ENCODE measurements at regions of chr16 and their contacts with region 1.

Region 1: DNA sequence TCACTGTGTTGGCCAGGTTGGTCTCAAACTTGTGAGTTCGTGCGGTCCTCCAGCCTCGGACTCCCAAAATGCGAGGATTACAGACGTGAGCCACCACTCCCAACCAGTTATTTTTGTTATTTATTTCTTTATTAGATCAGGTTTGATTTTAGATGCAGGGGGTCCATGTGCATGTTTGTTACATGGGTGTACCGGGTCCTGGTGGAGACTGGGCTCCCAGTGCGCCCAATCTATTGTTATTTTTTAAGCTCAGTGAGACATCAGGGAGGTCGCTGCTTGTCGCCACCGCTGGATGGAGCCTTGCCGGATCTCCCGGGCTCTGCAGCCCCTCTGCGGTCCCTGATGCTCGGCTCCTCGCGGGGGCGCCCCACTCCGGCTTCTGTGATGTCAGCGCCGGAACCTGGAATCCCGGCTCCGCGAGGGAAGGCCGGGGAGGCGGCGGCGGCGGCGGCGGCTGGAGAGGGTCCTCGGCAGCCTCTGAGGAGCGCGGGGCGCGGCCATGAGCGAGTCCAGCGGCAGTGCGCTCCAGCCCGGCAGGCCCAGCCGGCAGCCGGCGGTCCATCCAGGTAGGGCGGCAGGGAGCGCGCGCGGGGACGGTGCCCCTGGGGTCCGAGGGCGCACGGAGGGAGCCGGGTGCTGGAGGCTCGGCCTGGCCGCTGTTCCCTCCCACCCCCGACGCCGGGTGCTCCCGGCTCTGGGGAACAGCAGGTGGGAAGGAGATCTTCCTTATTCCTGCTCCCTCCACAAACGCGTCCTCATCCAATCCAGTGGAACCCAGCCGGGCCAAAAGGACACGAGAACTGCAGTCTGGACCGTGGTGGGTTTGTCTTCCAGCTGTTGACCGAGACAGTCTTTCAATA is at the start of gene TMC7:
- DNase-seq: peak; percentile 43
- H3K4me3 Mint-ChIP-seq: no peak within 1 kb of the TSS
- H3K27ac Mint-ChIP-seq: no peak within 1 kb of the TSS
- H3K4me1 Mint-ChIP-seq: peaks cover 4% of the 10 kb centered on the region
- H3K27me3 Mint-ChIP-seq: peaks cover 68% of the 10 kb centered on the region

Region 2: DNA sequence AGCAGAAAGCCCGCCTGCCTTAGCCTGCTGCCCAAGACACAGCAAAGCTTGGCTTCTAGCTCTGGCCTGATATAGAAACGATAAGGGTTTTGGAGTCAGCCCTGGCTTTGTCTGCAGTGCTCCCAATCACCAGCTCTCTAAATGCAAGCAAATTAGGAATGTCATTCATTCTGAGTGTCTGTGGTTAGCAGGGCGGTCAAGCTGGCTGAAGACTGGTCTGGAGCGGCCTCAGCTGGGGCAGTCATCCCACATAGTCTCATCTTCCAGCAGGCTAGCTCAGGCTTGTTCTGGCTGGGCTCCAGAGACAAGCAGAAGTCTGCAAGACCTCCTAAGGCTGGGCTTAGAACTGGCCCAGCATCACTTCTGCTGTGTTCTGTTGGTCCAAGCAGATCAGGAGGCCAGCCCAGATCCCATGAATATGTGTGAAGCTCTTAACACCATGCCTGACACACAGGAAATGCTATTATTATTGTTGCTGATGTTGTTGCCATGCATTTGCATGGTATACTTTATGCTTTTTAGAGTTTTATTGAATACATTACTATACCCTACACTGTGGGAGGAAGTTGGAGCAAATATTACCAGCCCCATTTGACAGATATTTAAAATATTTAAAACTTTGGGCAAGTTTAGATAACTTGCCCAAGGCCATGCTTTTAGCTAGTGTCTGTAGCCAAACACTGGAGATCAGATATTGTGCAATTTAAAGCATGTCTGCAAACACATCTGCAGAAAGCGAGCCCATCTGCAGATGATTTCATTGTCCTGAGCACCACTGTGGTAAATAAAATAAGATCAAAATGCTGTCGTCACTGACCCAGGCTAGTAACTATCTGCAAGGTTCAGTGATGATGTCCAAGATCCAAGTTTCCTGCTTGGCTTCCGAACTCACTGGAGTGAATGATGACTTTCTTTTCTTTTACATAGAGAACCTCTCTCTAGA is 24.7 kb after region 1 on chr16:
- CTCF ChIA-PET with region 1: no interaction called
- DNase-seq: no peak
- H3K4me3 Mint-ChIP-seq: no peak overlapping the region
- H3K27ac Mint-ChIP-seq: no peak overlapping the region
- H3K4me1 Mint-ChIP-seq: no peaks in the 10 kb centered on the region
- H3K27me3 Mint-ChIP-seq: peaks cover 4% of the 10 kb centered on the region

Region 3: DNA sequence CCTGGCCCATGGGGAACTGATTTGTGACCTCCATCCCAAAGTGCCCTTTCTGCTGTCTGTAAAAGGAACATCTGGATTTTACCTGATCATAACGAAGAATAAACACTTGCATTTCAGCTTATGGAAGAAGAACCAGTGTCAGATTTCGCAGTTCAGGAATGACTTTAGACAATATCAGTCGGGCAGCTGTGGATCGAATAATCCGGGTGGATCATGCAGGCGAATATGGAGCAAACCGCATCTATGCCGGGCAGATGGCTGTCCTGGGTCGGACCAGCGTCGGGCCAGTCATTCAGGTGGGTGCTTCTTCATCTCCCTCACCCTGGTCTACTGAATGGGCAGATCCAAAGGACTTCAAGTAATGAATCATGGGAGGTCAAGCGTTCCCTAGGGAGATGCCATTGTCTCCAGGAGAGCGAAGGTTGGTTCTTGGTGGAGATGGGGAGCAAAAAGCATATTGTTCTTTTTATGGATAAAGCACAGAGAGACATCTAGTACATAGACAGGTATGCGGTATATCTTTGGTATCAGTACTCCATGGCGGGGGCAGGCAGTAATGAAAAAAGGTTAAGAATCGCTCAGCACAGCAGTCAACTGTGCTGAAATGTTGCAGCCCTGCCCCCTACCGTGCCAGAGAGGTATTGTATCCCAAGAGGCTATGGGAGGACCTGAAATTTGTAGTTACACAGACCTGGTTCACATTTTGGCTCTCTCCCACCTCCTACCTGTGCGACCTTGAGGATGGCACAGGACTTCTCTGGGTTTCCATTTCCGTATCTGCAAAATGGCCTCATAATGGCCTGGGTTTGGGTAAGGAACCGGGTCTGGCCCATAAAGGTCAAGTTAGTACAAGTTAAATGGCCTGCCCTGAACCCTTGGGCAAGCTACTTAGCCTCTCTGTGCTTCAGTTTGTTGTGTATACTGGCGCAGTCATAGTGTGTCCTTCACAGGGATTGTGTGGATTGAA is 88.3 kb after region 1 on chr16:
- CTCF ChIA-PET with region 1: interaction called, 14 read pairs
- DNase-seq: peak; percentile 74
- H3K4me3 Mint-ChIP-seq: no peak overlapping the region
- H3K27ac Mint-ChIP-seq: peak overlapping the region; percentile 50
- H3K4me1 Mint-ChIP-seq: peaks cover 17% of the 10 kb centered on the region
- H3K27me3 Mint-ChIP-seq: no peaks in the 10 kb centered on the region

Measured in activated naive CD4-positive, alpha-beta T cell treated with anti-CD3 and anti-CD28 coated beads, Interleukin-2, amount 10 ng/mL, durations not matched to agents 7 days and 5 days (primary cell).